CD8-positive, alpha-beta T cell (primary cell): ENCODE measurements at regions of chr7 and their contacts with region 1.

Region 1: DNA sequence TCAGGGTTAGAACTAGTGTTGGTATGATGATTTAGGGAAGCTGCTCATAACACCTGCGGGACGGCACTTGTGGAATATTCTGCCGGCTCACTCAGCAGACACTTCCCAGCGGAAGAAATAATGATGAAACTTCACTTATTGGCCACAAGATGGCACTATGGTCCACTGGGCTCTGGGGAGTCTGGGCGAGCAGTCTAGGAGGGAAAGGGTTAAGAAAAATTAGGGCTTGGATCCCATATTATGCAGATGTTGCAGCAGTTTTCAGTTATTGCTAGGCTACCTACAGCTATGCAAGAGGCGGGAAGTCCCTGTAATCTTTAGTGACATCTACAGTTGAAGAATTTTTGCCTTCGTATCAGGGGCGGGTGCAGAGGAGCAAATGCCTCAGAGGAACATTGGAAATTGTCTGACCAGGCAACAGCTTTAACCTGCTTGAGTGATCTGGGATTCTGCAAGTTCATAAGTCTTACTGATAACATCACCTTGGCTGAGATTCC is 238.7 kb upstream of the PRSS58 start:
- DNase-seq: peak in 2 of 9 experiments; percentile 46 to 67
- ATAC-seq: peak; percentile 56
- H3K4me3 ChIP-seq: no peak overlapping the region
- H3K4me3 Mint-ChIP-seq: peak overlapping the region; percentile 51
- H3K27ac ChIP-seq: no peak overlapping the region
- H3K27ac Mint-ChIP-seq: peak overlapping the region; percentile 78
- H3K4me1 ChIP-seq: peaks cover 25% of the 10 kb centered on the region
- H3K4me1 Mint-ChIP-seq: peaks cover 57% of the 10 kb centered on the region
- H3K27me3 ChIP-seq: no peaks in the 10 kb centered on the region
- H3K27me3 Mint-ChIP-seq: no peaks in the 10 kb centered on the region
- CTCF ChIP-seq: peak; percentile 74

Region 2: GRCh38 chr7:142459551-142459963 is 37.0 kb before region 1 on chr7:
- CTCF ChIA-PET with region 1: interaction called, 25 read pairs
- POLR2A ChIA-PET with region 1: no interaction called
- intact Hi-C with region 1: loop called in 1 of 2 experiments (anchors 5 kb)
- DNase-seq: peak in 3 of 9 experiments; percentile 25 to 69 (median 56)
- ATAC-seq: peak; percentile 52
- H3K4me3 ChIP-seq: no peak overlapping the region
- H3K4me3 Mint-ChIP-seq: peak overlapping the region; percentile 27
- H3K27ac ChIP-seq: no peak overlapping the region
- H3K27ac Mint-ChIP-seq: peak overlapping the region; percentile 41
- H3K4me1 ChIP-seq: peaks cover 33% of the 10 kb centered on the region
- H3K4me1 Mint-ChIP-seq: peaks cover 55% of the 10 kb centered on the region
- H3K27me3 ChIP-seq: no peaks in the 10 kb centered on the region
- H3K27me3 Mint-ChIP-seq: no peaks in the 10 kb centered on the region
- CTCF ChIP-seq: peak; percentile 52

Region 3: GRCh38 chr7:142508258-142508689 is 11.7 kb after region 1 on chr7:
- CTCF ChIA-PET with region 1: interaction called, 54 read pairs
- POLR2A ChIA-PET with region 1: no interaction called
- intact Hi-C with region 1: no loop called
- DNase-seq: peak in 5 of 9 experiments; percentile 16 to 51 (median 29)
- ATAC-seq: peak; percentile 76
- H3K4me3 ChIP-seq: no peak overlapping the region
- H3K4me3 Mint-ChIP-seq: peak overlapping the region; percentile 26
- H3K27ac ChIP-seq: no peak overlapping the region
- H3K27ac Mint-ChIP-seq: peak overlapping the region; percentile 81
- H3K4me1 ChIP-seq: peaks cover 31% of the 10 kb centered on the region
- H3K4me1 Mint-ChIP-seq: peaks cover 37% of the 10 kb centered on the region
- H3K27me3 ChIP-seq: no peaks in the 10 kb centered on the region
- H3K27me3 Mint-ChIP-seq: no peaks in the 10 kb centered on the region
- CTCF ChIP-seq: no peak

Region 4: GRCh38 chr7:142516038-142516501 is 19.5 kb after region 1 on chr7:
- CTCF ChIA-PET with region 1: interaction called, 54 read pairs
- POLR2A ChIA-PET with region 1: interaction called, 3 read pairs
- intact Hi-C with region 1: no loop called
- DNase-seq: peak in 4 of 9 experiments; percentile 26 to 75 (median 46)
- ATAC-seq: peak; percentile 68
- H3K4me3 ChIP-seq: no peak overlapping the region
- H3K4me3 Mint-ChIP-seq: no peak overlapping the region
- H3K27ac ChIP-seq: no peak overlapping the region
- H3K27ac Mint-ChIP-seq: no peak overlapping the region
- H3K4me1 ChIP-seq: peaks cover 25% of the 10 kb centered on the region
- H3K4me1 Mint-ChIP-seq: peaks cover 48% of the 10 kb centered on the region
- H3K27me3 ChIP-seq: no peaks in the 10 kb centered on the region
- H3K27me3 Mint-ChIP-seq: no peaks in the 10 kb centered on the region
- CTCF ChIP-seq: peak; percentile 66

Region 5: DNA sequence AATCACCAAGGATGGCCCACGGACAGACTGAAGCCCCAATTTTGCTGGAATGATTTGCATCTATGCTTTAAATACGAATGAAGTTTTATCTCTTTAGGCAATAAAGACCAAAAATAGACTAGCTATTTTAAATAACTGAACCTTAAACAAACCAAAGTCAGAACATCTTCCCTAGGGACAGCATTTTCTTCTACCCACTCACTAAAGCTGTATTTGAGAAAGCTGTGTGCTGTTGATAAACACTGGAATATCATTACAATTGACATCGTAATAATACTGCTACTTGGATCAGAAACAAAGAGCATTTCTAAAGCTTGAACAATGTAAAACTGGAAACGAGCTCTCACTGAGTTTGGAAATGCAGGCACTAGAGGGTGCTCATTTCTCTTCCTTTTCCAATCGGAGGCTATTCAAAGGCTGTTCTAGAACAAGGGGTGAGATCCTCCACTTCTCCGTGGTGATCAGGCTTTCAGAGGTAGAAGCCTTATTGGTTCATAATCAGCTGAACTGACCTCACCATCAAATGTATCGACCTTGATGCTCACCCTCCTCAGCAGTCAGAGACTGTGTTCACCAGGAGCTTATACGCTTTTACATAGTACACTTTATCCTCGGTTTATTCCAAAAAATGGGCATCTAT is 27.3 kb after region 1 on chr7:
- CTCF ChIA-PET with region 1: interaction called, 15 read pairs
- POLR2A ChIA-PET with region 1: interaction called, 3 read pairs
- intact Hi-C with region 1: no loop called
- DNase-seq: no peak
- ATAC-seq: no peak
- H3K4me3 ChIP-seq: no peak overlapping the region
- H3K4me3 Mint-ChIP-seq: no peak overlapping the region
- H3K27ac ChIP-seq: no peak overlapping the region
- H3K27ac Mint-ChIP-seq: peak overlapping the region; percentile 14
- H3K4me1 ChIP-seq: peaks cover 12% of the 10 kb centered on the region
- H3K4me1 Mint-ChIP-seq: peaks cover 18% of the 10 kb centered on the region
- H3K27me3 ChIP-seq: no peaks in the 10 kb centered on the region
- H3K27me3 Mint-ChIP-seq: no peaks in the 10 kb centered on the region
- CTCF ChIP-seq: no peak

Region 6: DNA sequence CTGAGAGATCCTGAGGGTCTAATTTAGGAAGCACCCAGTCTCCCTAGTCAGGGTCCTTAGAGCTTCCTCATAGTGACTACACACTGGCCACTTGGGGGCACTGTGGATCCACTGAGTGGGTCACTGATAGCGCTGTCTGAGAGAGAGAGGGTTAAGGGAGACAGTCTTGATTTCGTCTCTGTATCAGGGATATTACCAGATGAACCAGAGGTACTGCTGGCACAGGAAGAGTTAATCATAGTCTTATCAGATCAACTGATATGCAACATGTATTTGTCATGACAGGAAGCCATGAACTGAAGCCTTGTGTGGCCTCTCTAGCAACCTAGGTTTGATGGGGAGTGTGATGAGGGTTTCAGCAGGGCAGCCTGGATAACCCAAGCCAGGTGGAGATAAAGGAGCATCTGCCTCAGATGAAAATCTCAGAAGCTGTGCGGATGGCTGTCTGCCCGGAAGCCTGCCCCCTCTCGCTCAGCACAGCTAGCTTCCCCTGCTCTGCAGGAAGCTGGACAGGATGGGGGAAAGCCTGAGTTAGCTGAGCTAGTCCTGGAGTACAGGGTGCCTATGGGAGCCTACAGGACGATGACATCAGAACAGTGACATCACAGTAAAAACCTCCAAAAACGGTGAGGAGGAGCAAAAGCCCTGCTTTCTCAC is 38.7 kb after region 1 on chr7:
- CTCF ChIA-PET with region 1: interaction called, 7 read pairs
- POLR2A ChIA-PET with region 1: no interaction called
- intact Hi-C with region 1: loop called in 1 of 2 experiments (anchors 5 kb)
- DNase-seq: peak; percentile 24 to 82 (median 68)
- ATAC-seq: peak; percentile 77
- H3K4me3 ChIP-seq: peak overlapping the region; percentile 20 to 22
- H3K4me3 Mint-ChIP-seq: peak overlapping the region; percentile 38
- H3K27ac ChIP-seq: peak overlapping the region; percentile 42 to 46
- H3K27ac Mint-ChIP-seq: peak overlapping the region; percentile 73
- H3K4me1 ChIP-seq: peaks cover 24% of the 10 kb centered on the region
- H3K4me1 Mint-ChIP-seq: peaks cover 29% of the 10 kb centered on the region
- H3K27me3 ChIP-seq: no peaks in the 10 kb centered on the region
- H3K27me3 Mint-ChIP-seq: no peaks in the 10 kb centered on the region
- CTCF ChIP-seq: no peak

Region 7: DNA sequence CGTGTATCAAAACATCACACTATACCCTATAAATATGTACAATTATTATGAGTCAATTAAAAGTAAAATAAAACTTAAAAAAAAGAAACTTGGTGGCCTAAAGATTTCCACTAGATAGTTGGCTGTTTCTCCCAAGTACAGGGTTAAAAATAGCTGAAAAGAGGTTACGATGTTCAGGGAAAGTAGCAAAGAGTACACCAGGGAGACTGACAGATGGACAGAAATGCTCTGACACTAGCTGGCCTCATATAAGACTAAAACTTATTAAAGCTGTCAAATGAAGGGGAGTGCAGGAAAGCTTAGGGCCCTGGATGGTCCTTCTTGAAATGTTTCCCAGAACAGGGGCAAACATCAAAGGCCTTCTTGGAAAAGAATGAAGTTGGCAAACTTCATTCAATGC is 1354.1 kb after region 1 on chr7:
- CTCF ChIA-PET with region 1: no interaction called
- POLR2A ChIA-PET with region 1: no interaction called
- intact Hi-C with region 1: no loop called
- DNase-seq: no peak
- ATAC-seq: no peak
- H3K4me3 ChIP-seq: no peak overlapping the region
- H3K4me3 Mint-ChIP-seq: no peak overlapping the region
- H3K27ac ChIP-seq: no peak overlapping the region
- H3K27ac Mint-ChIP-seq: no peak overlapping the region
- H3K4me1 ChIP-seq: no peaks in the 10 kb centered on the region
- H3K4me1 Mint-ChIP-seq: no peaks in the 10 kb centered on the region
- H3K27me3 ChIP-seq: no peaks in the 10 kb centered on the region
- H3K27me3 Mint-ChIP-seq: no peaks in the 10 kb centered on the region
- CTCF ChIP-seq: no peak